ENCODE measurements at regions of chr6 and their contacts with region 1.

Region 1: GRCh38 chr6:73610444-73611275 is 43.1 kb downstream of the SLC17A5 start:
- DNase-seq: no peak
- H3K4me3 ChIP-seq: no peak overlapping the region
- H3K27ac ChIP-seq: peak overlapping the region in 3 of 4 donors; percentile 6 to 26 (median 21)
- H3K4me1 ChIP-seq: peaks cover 0 to 10% (median 9%) of the 10 kb centered on the region in 4 donors
- H3K27me3 ChIP-seq: no peaks in the 10 kb centered on the region
- CTCF ChIP-seq: peak; percentile 69 to 75 (median 72)
- EP300 ChIP-seq: no peak
- POLR2A ChIP-seq: no peak

Region 2: DNA sequence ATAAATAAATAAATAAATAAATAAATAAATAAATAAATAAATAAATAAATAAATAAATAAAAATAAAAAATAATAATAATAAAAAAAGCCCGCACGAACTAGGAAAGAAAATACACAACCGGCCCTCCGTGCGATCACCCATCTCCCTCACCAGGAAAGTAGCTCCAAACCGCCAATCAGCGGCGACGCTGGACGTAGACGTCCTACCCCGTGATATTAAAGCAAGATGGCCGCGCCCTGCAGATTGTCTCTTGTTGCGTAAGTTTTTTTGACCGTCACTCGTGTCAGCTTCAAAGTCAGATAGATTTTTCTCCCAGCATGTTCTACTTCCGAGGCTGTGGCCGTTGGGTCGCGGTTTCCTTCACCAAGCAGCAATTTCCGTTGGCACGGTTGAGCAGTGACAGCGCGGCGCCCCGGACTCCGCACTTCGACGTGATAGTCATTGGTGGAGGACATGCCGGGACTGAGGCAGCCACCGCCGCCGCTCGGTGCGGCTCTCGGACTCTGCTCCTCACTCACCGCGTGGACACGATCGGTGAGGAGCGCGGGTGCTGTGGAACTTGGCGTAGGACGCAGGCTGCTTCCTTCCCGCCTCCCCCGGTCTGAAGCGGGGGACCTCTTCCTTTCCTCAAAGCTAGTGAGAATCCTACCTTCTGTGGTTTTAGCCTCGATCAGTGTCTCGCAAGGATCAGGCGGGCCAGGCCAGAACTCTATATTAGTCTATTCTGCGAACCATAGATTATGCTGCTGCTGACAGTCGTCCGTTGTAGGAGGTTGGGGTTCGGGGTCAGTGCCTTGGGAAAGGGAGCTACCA is 148.9 kb before region 1 on chr6 and contains the start of gene MTO1:
- intact Hi-C with region 1: loop called (anchors 5 kb)
- DNase-seq: peak; percentile 97
- H3K4me3 ChIP-seq: peak within 1 kb of the TSS; percentile 72 to 95 (median 90)
- H3K27ac ChIP-seq: peak within 1 kb of the TSS; percentile 87 to 97 (median 95)
- H3K4me1 ChIP-seq: peaks cover 20 to 36% (median 34%) of the 10 kb centered on the region in 4 donors
- H3K27me3 ChIP-seq: no peaks in the 10 kb centered on the region
- CTCF ChIP-seq: no peak
- EP300 ChIP-seq: no peak
- POLR2A ChIP-seq: no peak
- total RNA-seq, gene MTO1: 15.2 to 38.6 (median 25.7) TPM

Region 3: GRCh38 chr6:73515204-73515655 is 95.4 kb before region 1 on chr6:
- intact Hi-C with region 1: loop called (anchors 2 kb)
- DNase-seq: no peak
- H3K4me3 ChIP-seq: peak overlapping the region in 1 of 4 donors; percentile 6
- H3K27ac ChIP-seq: peak overlapping the region; percentile 49 to 66 (median 56)
- H3K4me1 ChIP-seq: peaks cover 31 to 49% (median 48%) of the 10 kb centered on the region in 4 donors
- H3K27me3 ChIP-seq: no peaks in the 10 kb centered on the region
- CTCF ChIP-seq: no peak
- EP300 ChIP-seq: no peak
- POLR2A ChIP-seq: no peak